ENCODE measurements at regions of chr15 and their contacts with region 1.

Region 1: GRCh38 chr15:60340207-60340921 is 57.4 kb downstream of the ANXA2 start:
- DNase-seq: no peak
- ATAC-seq: no peak
- H3K4me3 ChIP-seq: no peak overlapping the region
- H3K27ac ChIP-seq: no peak overlapping the region
- H3K4me1 ChIP-seq: peaks cover 22% of the 10 kb centered on the region
- H3K27me3 ChIP-seq: no peaks in the 10 kb centered on the region
- CTCF ChIP-seq: peak; percentile 19; the same call in 1 of the 2 replicates

Region 2: GRCh38 chr15:60172143-60172542 is 168.2 kb before region 1 on chr15:
- CTCF ChIA-PET with region 1: no interaction called
- POLR2A ChIA-PET with region 1: interaction called, 11 read pairs
- in situ Hi-C with region 1: no loop called
- intact Hi-C with region 1: no loop called
- DNase-seq: no peak
- ATAC-seq: no peak
- H3K4me3 ChIP-seq: no peak overlapping the region
- H3K27ac ChIP-seq: no peak overlapping the region
- H3K4me1 ChIP-seq: no peaks in the 10 kb centered on the region
- H3K27me3 ChIP-seq: no peaks in the 10 kb centered on the region
- CTCF ChIP-seq: no peak

Region 3: DNA sequence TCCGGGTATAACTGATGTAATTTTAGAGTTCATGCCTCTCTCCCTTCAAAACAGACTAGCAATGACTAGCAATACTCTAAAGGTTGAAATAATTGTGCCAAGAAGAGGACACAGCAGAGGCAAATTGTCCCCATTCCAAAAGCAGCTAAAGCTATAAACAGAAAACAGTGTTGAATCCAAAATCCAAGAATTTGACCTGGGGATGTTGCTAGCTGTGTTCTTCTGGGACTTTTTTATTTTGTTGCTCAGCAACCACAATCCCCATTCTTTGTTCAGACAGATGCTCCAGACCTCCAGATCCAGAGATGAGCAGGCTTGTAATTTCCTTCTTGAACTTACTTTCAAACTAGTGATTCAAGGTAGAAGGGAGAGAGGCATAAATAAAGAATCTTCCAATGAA is 144.8 kb before region 1 on chr15:
- CTCF ChIA-PET with region 1: no interaction called
- POLR2A ChIA-PET with region 1: no interaction called
- in situ Hi-C with region 1: no loop called
- intact Hi-C with region 1: no loop called
- DNase-seq: no peak
- ATAC-seq: no peak
- H3K4me3 ChIP-seq: no peak overlapping the region
- H3K27ac ChIP-seq: no peak overlapping the region
- H3K4me1 ChIP-seq: no peaks in the 10 kb centered on the region
- H3K27me3 ChIP-seq: peaks cover 8% of the 10 kb centered on the region
- CTCF ChIP-seq: no peak

Region 4: GRCh38 chr15:60353245-60353920 is 13.0 kb after region 1 on chr15:
- CTCF ChIA-PET with region 1: no interaction called
- POLR2A ChIA-PET with region 1: no interaction called
- in situ Hi-C with region 1: no loop called
- intact Hi-C with region 1: loop called (anchors 1 kb)
- DNase-seq: no peak
- ATAC-seq: no peak
- H3K4me3 ChIP-seq: no peak overlapping the region
- H3K27ac ChIP-seq: peak overlapping the region; percentile 54; the same call in 1 of the 2 replicates
- H3K4me1 ChIP-seq: peaks cover 60% of the 10 kb centered on the region
- H3K27me3 ChIP-seq: no peaks in the 10 kb centered on the region
- CTCF ChIP-seq: no peak

Measured in Panc1 (cell line).